Panc1 (cell line): ENCODE measurements at regions of chr12 and their contacts with region 1.

Region 1: GRCh38 chr12:990661-991349 is at the start of gene ERC1:
- DNase-seq: no peak
- ATAC-seq: peak; percentile 97
- H3K4me3 ChIP-seq: peak within 1 kb of the TSS; percentile 69 to 80
- H3K27ac ChIP-seq: peak within 1 kb of the TSS; percentile 95
- H3K4me1 ChIP-seq: peaks cover 20% of the 10 kb centered on the region
- H3K27me3 ChIP-seq: no peaks in the 10 kb centered on the region
- CTCF ChIP-seq: no peak; the same call in 1 of the 2 replicates
- total RNA-seq, gene ERC1: 40.4 TPM

Region 2: DNA sequence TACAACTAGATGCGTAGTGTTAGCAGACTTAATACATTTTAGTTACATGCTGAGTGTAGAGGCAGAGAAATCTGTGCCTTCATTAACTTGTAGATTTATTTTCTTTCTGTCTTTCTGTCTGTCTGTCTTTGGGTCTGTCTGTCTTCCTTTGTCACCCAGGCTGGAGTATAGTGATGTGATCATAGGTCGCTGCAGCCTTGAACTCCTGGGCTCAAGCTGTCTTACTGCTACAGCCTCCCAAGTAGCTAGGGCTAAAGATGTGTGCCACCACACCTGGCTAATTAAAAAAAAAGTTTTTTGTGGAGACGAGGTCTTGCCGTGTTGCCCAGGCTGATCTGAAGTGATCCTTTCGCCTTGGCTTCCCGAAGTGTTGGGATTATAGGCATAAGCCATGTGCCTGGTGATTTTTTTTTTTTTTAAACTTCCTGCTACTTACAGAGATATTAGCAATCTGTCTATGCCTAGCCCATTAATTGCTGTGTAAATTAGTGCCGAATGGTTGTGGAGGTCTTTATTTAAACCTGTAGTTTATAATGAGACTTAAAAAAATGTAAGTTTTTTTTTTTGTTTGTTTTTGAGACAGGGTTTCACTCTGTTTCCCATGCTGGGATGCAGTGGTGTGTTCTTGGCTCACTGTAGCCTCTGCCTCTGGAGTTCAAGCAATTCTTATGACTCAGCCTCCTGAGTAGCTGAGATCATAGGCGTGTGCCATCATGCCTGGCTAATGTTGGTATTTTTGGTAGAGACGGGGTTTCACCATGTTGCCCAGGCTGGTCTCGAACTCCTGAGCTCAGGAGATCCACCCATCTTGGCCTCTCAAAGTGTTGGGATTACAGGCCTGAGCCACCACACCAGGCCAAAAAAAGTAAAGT is 23.0 kb after region 1 on chr12:
- CTCF ChIA-PET with region 1: interaction called, 3 read pairs
- POLR2A ChIA-PET with region 1: interaction called, 11 read pairs
- in situ Hi-C with region 1: no loop called
- intact Hi-C with region 1: no loop called
- DNase-seq: no peak
- ATAC-seq: peak; percentile 82; the same call in 1 of the 2 replicates
- H3K4me3 ChIP-seq: no peak overlapping the region
- H3K27ac ChIP-seq: peak overlapping the region; percentile 34
- H3K4me1 ChIP-seq: peaks cover 6% of the 10 kb centered on the region; the same call in 1 of the 2 replicates
- H3K27me3 ChIP-seq: no peaks in the 10 kb centered on the region
- CTCF ChIP-seq: no peak

Region 3: DNA sequence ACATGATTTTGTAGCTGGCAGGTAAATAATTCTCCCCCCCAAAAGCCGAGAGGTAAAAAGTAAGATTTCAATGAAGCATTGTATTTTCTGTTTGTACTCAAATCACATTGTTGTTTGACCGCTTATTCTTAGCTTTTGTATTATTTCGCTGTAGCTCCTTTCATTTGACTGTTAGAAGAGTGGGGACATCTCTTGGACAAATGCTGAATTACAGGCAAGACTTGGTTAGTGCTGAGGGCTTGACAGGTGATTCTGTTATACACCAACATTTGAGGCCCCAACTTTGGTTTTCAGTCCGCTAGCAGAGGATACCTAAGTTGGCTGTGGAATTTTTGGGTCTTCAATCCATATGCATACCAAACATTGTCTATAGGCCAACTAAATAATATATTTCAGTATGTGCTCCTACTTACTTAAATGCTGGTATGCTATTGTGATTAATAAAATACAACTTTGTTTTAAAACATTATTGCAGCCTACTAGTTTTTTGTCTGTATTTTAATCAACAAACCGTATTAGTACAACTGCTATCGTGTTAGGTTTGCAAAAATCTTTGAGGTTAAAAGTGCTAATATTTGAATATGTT is 102.5 kb after region 1 on chr12:
- CTCF ChIA-PET with region 1: no interaction called
- POLR2A ChIA-PET with region 1: no interaction called
- in situ Hi-C with region 1: no loop called
- intact Hi-C with region 1: loop called (anchors 10 kb)
- DNase-seq: no peak
- ATAC-seq: peak; percentile 89
- H3K4me3 ChIP-seq: no peak overlapping the region
- H3K27ac ChIP-seq: no peak overlapping the region
- H3K4me1 ChIP-seq: peaks cover 6% of the 10 kb centered on the region; the same call in 1 of the 2 replicates
- H3K27me3 ChIP-seq: no peaks in the 10 kb centered on the region
- CTCF ChIP-seq: peak; percentile 78

Region 4: DNA sequence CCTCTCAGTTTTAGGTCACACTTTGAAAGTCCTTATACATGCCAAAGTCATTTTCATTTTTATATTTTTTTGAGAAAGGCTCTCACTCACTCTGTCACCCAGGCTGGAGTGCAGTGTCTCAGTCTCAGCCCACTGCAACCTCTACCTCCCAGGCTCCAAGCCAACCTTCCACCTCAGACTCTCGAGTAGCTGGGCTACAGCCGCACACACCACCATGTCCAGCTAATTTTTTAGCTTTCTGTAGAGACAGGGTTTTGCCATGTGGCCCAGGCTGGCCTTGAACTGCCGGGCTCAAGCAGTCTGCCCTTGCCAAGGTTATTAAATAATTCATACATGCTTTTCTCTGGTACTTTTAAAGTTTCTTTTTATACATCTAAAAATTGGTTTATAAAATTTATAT is 166.2 kb after region 1 on chr12:
- CTCF ChIA-PET with region 1: no interaction called
- POLR2A ChIA-PET with region 1: interaction called, 20 read pairs
- in situ Hi-C with region 1: no loop called
- intact Hi-C with region 1: no loop called
- DNase-seq: no peak
- ATAC-seq: no peak
- H3K4me3 ChIP-seq: no peak overlapping the region
- H3K27ac ChIP-seq: no peak overlapping the region
- H3K4me1 ChIP-seq: peaks cover 5% of the 10 kb centered on the region; the same call in 1 of the 2 replicates
- H3K27me3 ChIP-seq: no peaks in the 10 kb centered on the region
- CTCF ChIP-seq: no peak